Posterior cingulate gyrus (tissue), 11 donors: ENCODE measurements at regions of chr7 and their contacts with region 1.

Region 1: DNA sequence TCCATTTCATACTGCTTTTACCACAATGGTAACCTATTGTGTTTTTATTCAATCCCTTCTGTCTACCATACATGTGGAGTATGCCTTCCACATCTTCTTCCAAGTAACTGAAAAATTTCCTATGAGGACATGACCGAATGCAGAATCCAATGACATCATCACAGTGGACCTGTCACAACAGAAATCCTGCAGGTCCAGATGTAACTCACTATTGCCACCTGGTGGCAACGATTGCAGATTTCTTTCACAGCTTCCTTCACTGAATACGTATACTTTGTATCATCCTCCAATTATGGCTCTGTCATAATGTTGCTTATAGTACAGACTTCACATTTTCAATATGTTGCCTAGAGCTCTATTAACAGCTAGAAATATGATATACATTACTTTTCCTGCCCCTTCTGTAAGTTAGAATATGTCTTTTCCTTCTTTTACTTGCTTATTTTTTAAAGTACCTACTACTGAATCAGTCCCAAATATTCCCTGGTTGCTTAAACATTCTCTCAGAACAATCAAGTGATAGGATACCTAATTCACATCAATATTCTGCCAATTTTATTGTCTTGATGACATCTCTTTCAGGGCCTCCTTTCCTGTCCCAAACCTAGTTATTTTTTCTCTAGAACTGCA is 45.4 kb downstream of the SLC13A1 start:
- DNase-seq: peak in 8 of 10 donors; percentile 40 to 89 (median 70)

Region 2: GRCh38 chr7:122803323-122803722 is 351.0 kb before region 1 on chr7:
- intact Hi-C with region 1: loop called (anchors 10 kb)
- DNase-seq: peak in 2 of 10 donors; percentile 11 to 20

Region 3: GRCh38 chr7:122886357-122887081 is 267.8 kb before region 1 on chr7 and contains the start of gene CADPS2:
- intact Hi-C with region 1: loop called (anchors 10 kb)
- DNase-seq: peak; percentile 34 to 95 (median 64)

Region 4: GRCh38 chr7:123285076-123285732 is 130.9 kb after region 1 on chr7:
- intact Hi-C with region 1: no loop called
- DNase-seq: no peak